WTC11 (cell line): ENCODE measurements at regions of chr16 and their contacts with region 1.

Region 1: GRCh38 chr16:49958448-49958847 is 66.6 kb upstream of the CNEP1R1 start:
- DNase-seq: no peak
- ATAC-seq: no peak
- H3K4me3 Mint-ChIP-seq: no peak overlapping the region
- H3K27ac Mint-ChIP-seq: no peak overlapping the region
- H3K4me1 Mint-ChIP-seq: no peaks in the 10 kb centered on the region; the same call in 1 of the 2 replicates
- H3K27me3 Mint-ChIP-seq: no peaks in the 10 kb centered on the region
- CTCF ChIP-seq: no peak

Region 2: GRCh38 chr16:49800876-49801275 is 157.6 kb before region 1 on chr16:
- CTCF ChIA-PET with region 1: no interaction called
- POLR2A ChIA-PET with region 1: no interaction called
- DNase-seq: no peak
- ATAC-seq: no peak
- H3K4me3 Mint-ChIP-seq: no peak overlapping the region
- H3K27ac Mint-ChIP-seq: peak overlapping the region; percentile 49; the same call in 1 of the 2 replicates
- H3K4me1 Mint-ChIP-seq: peaks cover 24% of the 10 kb centered on the region
- H3K27me3 Mint-ChIP-seq: no peaks in the 10 kb centered on the region
- CTCF ChIP-seq: no peak

Region 3: GRCh38 chr16:49921791-49922456 is 36.5 kb before region 1 on chr16:
- CTCF ChIA-PET with region 1: interaction called, 20 read pairs
- POLR2A ChIA-PET with region 1: no interaction called
- DNase-seq: peak; percentile 87
- ATAC-seq: peak; percentile 92
- H3K4me3 Mint-ChIP-seq: no peak overlapping the region
- H3K27ac Mint-ChIP-seq: no peak overlapping the region
- H3K4me1 Mint-ChIP-seq: peaks cover 3% of the 10 kb centered on the region
- H3K27me3 Mint-ChIP-seq: no peaks in the 10 kb centered on the region
- CTCF ChIP-seq: peak; percentile 55; the same call in 1 of the 2 replicates

Region 4: GRCh38 chr16:49944221-49944620 is 14.2 kb before region 1 on chr16:
- CTCF ChIA-PET with region 1: interaction called, 14 read pairs
- POLR2A ChIA-PET with region 1: no interaction called
- DNase-seq: no peak
- ATAC-seq: no peak
- H3K4me3 Mint-ChIP-seq: no peak overlapping the region
- H3K27ac Mint-ChIP-seq: no peak overlapping the region
- H3K4me1 Mint-ChIP-seq: no peaks in the 10 kb centered on the region
- H3K27me3 Mint-ChIP-seq: no peaks in the 10 kb centered on the region
- CTCF ChIP-seq: no peak

Region 5: GRCh38 chr16:49969091-49970030 is 10.9 kb after region 1 on chr16:
- CTCF ChIA-PET with region 1: interaction called, 38 read pairs
- POLR2A ChIA-PET with region 1: no interaction called
- DNase-seq: no peak
- ATAC-seq: peak; percentile 28; the same call in 1 of the 2 replicates
- H3K4me3 Mint-ChIP-seq: no peak overlapping the region
- H3K27ac Mint-ChIP-seq: no peak overlapping the region
- H3K4me1 Mint-ChIP-seq: peaks cover 8% of the 10 kb centered on the region
- H3K27me3 Mint-ChIP-seq: no peaks in the 10 kb centered on the region
- CTCF ChIP-seq: no peak

Region 6: DNA sequence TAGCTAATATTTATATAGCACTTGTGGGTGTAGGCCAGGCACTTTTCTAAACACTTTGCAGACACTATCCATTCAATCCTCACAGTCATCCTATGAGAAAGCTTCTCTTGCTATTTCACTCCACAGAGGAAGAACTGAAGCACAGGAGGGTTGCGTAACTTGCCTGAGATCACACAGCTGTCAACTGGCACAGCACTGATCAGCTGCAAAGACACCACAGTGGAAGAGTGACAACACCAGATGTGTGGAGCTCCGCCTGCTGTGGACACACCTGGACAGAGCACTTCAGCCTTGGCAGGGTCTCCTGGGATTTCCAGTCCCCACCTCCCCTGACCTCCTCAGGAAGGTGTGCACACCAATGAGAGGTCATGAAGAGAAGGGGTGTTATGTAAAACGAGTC is 53.3 kb after region 1 on chr16:
- CTCF ChIA-PET with region 1: interaction called, 11 read pairs
- POLR2A ChIA-PET with region 1: no interaction called
- DNase-seq: no peak
- ATAC-seq: no peak
- H3K4me3 Mint-ChIP-seq: no peak overlapping the region
- H3K27ac Mint-ChIP-seq: no peak overlapping the region
- H3K4me1 Mint-ChIP-seq: peaks cover 18% of the 10 kb centered on the region
- H3K27me3 Mint-ChIP-seq: peaks cover 5% of the 10 kb centered on the region; the same call in 1 of the 2 replicates
- CTCF ChIP-seq: no peak

Region 7: GRCh38 chr16:50065624-50066481 is 107.4 kb after region 1 on chr16 and contains the start of gene HEATR3:
- CTCF ChIA-PET with region 1: interaction called, 17 read pairs
- POLR2A ChIA-PET with region 1: no interaction called
- DNase-seq: peak; percentile 94
- ATAC-seq: peak; percentile 91
- H3K4me3 Mint-ChIP-seq: peak within 1 kb of the TSS; percentile 78
- H3K27ac Mint-ChIP-seq: peak within 1 kb of the TSS; percentile 58
- H3K4me1 Mint-ChIP-seq: peaks cover 17% of the 10 kb centered on the region
- H3K27me3 Mint-ChIP-seq: no peaks in the 10 kb centered on the region; the same call in 1 of the 2 replicates
- CTCF ChIP-seq: no peak
- total RNA-seq, gene HEATR3: 27.8 to 28.1 TPM (median 28.0 TPM) in 3 replicates